PC-3 (cell line): ENCODE measurements at regions of chr13 and their contacts with region 1.

Region 1: DNA sequence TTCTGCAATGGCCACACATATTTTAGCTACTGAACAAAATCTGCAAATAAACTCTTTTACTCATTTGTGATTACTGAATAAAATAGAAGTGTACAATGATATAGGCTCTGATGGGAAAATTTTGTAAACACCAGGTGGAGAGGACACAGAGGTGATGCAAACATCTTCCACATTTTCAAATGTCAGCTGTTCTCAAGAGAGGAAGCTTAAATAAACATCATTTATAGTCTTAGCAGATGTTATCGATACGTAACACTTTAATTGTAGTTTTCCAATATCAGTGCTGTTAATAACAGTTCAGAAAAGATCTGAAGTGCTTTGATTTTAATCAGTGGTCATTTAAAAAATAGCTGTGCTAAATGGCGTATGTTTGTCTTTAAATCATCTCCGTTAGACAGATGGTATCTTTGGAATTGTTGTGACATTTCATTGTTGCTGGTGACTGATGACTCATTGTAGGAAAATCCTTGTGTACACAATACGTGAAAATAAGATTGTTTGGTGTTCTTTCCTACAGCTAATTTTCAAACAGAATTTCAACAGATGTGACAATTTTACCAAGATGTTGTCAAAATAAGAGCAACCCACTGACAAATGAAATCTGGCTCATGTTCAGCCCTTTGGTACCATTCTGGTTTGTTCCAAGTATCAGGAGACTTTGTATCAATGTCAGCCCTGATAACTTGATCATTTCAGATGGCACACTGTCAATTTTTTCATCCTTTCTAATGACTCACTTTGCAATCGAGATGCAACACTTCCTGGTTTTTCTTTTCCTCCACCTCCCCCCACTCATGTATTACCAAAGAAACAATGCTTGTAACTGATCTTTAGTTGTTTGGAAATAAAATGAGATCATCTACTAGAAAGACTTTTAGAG is 516.0 kb downstream of the DCT start:
- DNase-seq: peak; percentile 73
- ATAC-seq: peak; percentile 88
- H3K4me3 ChIP-seq: no peak overlapping the region
- H3K27ac ChIP-seq: peak overlapping the region; percentile 74
- H3K4me1 ChIP-seq: peaks cover 19% of the 10 kb centered on the region
- H3K27me3 ChIP-seq: no peaks in the 10 kb centered on the region
- CTCF ChIP-seq: no peak

Region 2: DNA sequence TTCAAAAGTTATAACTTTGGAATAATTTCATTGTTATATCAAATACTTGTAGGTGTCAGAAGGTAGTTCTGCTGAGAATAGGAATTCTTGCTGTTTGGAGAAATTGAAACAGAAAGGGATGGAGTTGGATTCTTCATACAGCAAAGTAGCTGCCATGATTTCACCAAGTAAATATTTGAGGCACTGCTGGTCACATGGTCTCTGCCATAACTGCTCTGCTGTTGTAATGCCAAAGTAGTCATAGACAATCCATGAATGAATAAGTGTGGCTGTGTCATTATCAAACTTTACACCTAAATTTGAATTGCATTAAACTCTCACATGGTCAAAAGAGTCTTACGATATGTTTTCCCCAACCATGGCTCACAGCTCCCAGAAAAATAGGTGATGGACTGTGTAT is 428.2 kb before region 1 on chr13:
- CTCF ChIA-PET with region 1: no interaction called
- POLR2A ChIA-PET with region 1: no interaction called
- intact Hi-C with region 1: no loop called
- DNase-seq: no peak
- ATAC-seq: no peak
- H3K4me3 ChIP-seq: no peak overlapping the region
- H3K27ac ChIP-seq: no peak overlapping the region
- H3K4me1 ChIP-seq: no peaks in the 10 kb centered on the region
- H3K27me3 ChIP-seq: no peaks in the 10 kb centered on the region
- CTCF ChIP-seq: no peak

Region 3: GRCh38 chr13:94009701-94010100 is 46.2 kb after region 1 on chr13:
- CTCF ChIA-PET with region 1: no interaction called
- POLR2A ChIA-PET with region 1: no interaction called
- intact Hi-C with region 1: no loop called
- DNase-seq: peak; percentile 23
- ATAC-seq: no peak
- H3K4me3 ChIP-seq: no peak overlapping the region
- H3K27ac ChIP-seq: no peak overlapping the region
- H3K4me1 ChIP-seq: no peaks in the 10 kb centered on the region
- H3K27me3 ChIP-seq: no peaks in the 10 kb centered on the region
- CTCF ChIP-seq: no peak

Region 4: GRCh38 chr13:94112227-94112626 is 148.7 kb after region 1 on chr13:
- CTCF ChIA-PET with region 1: no interaction called
- POLR2A ChIA-PET with region 1: no interaction called
- intact Hi-C with region 1: loop called (anchors 10 kb)
- DNase-seq: peak; percentile 73
- ATAC-seq: peak; percentile 95
- H3K4me3 ChIP-seq: no peak overlapping the region
- H3K27ac ChIP-seq: no peak overlapping the region
- H3K4me1 ChIP-seq: peaks cover 14% of the 10 kb centered on the region
- H3K27me3 ChIP-seq: no peaks in the 10 kb centered on the region
- CTCF ChIP-seq: no peak